Gastrocnemius medialis (tissue), 4 donors: ENCODE measurements at regions of chr13 and their contacts with region 1.

Region 1: GRCh38 chr13:66618702-66619101 is 611.4 kb downstream of the PCDH9 start:
- DNase-seq: no peak
- ATAC-seq: no peak
- H3K4me3 ChIP-seq: no peak overlapping the region
- H3K27ac ChIP-seq: no peak overlapping the region
- H3K4me1 ChIP-seq: no peaks in the 10 kb centered on the region
- H3K27me3 ChIP-seq: no peaks in the 10 kb centered on the region
- CTCF ChIP-seq: peak in 2 of 5 experiments; percentile 23 to 38
- POLR2A ChIP-seq: no peak

Region 2: GRCh38 chr13:66534561-66534960 is 84.1 kb before region 1 on chr13:
- in situ Hi-C with region 1: no loop called
- intact Hi-C with region 1: no loop called
- DNase-seq: no peak
- ATAC-seq: no peak
- H3K4me3 ChIP-seq: no peak overlapping the region
- H3K27ac ChIP-seq: no peak overlapping the region
- H3K4me1 ChIP-seq: no peaks in the 10 kb centered on the region
- H3K27me3 ChIP-seq: no peaks in the 10 kb centered on the region
- CTCF ChIP-seq: no peak
- POLR2A ChIP-seq: no peak

Region 3: GRCh38 chr13:66689628-66690027 is 70.9 kb after region 1 on chr13:
- in situ Hi-C with region 1: no loop called
- intact Hi-C with region 1: loop called (anchors 2 kb)
- DNase-seq: no peak
- ATAC-seq: no peak
- H3K4me3 ChIP-seq: no peak overlapping the region
- H3K27ac ChIP-seq: no peak overlapping the region
- H3K4me1 ChIP-seq: no peaks in the 10 kb centered on the region
- H3K27me3 ChIP-seq: no peaks in the 10 kb centered on the region
- CTCF ChIP-seq: no peak
- POLR2A ChIP-seq: no peak

Region 4: GRCh38 chr13:66915596-66916185 is 297.0 kb after region 1 on chr13:
- in situ Hi-C with region 1: no loop called
- intact Hi-C with region 1: no loop called
- DNase-seq: no peak
- ATAC-seq: no peak
- H3K4me3 ChIP-seq: no peak overlapping the region
- H3K27ac ChIP-seq: no peak overlapping the region
- H3K4me1 ChIP-seq: no peaks in the 10 kb centered on the region
- H3K27me3 ChIP-seq: no peaks in the 10 kb centered on the region
- CTCF ChIP-seq: no peak
- POLR2A ChIP-seq: no peak